ENCODE measurements at regions of chr10 and their contacts with region 1.

Region 1: GRCh38 chr10:29735596-29736318 is 101.0 kb upstream of the SVIL start:
- DNase-seq: peak; percentile 76 to 84 (median 80)
- H3K4me3 ChIP-seq: peak overlapping the region in 1 of 2 donors; percentile 62
- H3K4me3 Mint-ChIP-seq: peak overlapping the region; percentile 82 to 88 (median 84)
- H3K27ac ChIP-seq: peak overlapping the region; percentile 30
- H3K27ac Mint-ChIP-seq: peak overlapping the region in 4 of 7 donors; percentile 21 to 91 (median 74)
- H3K4me1 ChIP-seq: peaks cover 26% of the 10 kb centered on the region
- H3K4me1 Mint-ChIP-seq: peaks cover 23 to 48% (median 37%) of the 10 kb centered on the region in 4 donors
- H3K27me3 ChIP-seq: no peaks in the 10 kb centered on the region
- H3K27me3 Mint-ChIP-seq: no peaks in the 10 kb centered on the region

Region 2: DNA sequence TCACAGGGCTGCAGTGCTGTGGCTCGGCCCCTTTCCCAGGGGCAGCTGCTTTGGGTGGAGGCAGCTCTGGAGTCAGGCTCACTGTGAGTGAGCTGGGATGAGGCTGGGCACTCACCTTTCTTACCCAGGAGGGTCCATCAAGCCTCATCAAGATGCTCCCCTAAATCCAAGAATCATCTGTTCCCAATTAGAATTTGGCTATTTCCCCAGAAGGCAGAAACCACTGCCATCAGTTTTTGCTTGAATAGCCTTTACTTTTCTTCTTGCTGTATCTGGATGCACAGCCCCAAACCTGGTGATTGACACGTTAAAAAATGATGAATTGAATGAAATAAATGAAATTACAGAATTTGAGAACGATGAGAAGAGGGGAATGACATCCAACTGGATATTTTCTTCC is 521.2 kb before region 1 on chr10:
- CTCF ChIA-PET with region 1: no interaction called
- POLR2A ChIA-PET with region 1: no interaction called
- intact Hi-C with region 1: no loop called
- DNase-seq: no peak
- H3K4me3 ChIP-seq: no peak overlapping the region
- H3K4me3 Mint-ChIP-seq: no peak overlapping the region
- H3K27ac ChIP-seq: no peak overlapping the region
- H3K27ac Mint-ChIP-seq: no peak overlapping the region
- H3K4me1 ChIP-seq: no peaks in the 10 kb centered on the region
- H3K4me1 Mint-ChIP-seq: no peaks in the 10 kb centered on the region
- H3K27me3 ChIP-seq: no peaks in the 10 kb centered on the region
- H3K27me3 Mint-ChIP-seq: peaks cover 0 to 4% of the 10 kb centered on the region in 2 donors

Region 3: DNA sequence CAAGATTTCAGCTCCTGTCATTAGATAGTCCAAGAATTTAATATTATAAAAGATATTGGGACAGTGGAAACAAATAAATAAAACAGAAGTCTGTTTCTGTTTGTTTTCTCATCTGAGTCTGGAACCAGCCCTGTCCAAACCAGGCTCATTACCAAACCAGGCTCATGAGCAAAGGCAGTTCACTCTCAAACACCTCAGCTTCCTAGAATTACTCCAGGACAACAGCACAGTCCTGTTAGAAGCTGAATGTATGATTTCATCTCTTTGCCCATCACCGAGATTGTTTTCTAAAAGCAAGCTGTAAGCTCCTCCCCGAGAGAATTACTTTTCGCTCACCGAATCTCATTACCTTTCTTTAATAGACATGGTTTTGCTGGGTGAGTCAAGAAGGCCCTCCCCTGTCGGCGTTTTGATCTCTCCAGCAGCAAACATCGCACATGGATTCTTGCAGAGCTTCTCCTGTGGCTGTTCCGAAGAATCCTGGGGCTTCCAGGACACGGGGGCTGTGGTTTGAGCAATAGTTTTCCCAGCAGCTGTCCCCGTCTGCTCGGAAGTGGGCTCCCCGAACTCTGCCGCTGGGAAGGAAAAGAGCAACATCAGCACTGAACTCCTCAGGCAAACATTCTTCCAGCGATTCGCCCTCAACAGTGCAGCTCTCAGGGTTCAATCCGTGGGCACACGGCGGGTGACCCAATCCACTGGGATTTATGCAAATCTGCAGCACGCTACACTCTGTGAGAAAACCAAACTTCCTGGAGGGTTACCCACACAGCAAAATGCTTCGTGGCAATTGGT is 213.5 kb before region 1 on chr10:
- CTCF ChIA-PET with region 1: interaction called, 3 read pairs
- POLR2A ChIA-PET with region 1: no interaction called
- intact Hi-C with region 1: loop called (anchors 5 kb)
- DNase-seq: no peak
- H3K4me3 ChIP-seq: no peak overlapping the region
- H3K4me3 Mint-ChIP-seq: no peak overlapping the region
- H3K27ac ChIP-seq: no peak overlapping the region
- H3K27ac Mint-ChIP-seq: peak overlapping the region in 1 of 7 donors; percentile 57
- H3K4me1 ChIP-seq: no peaks in the 10 kb centered on the region
- H3K4me1 Mint-ChIP-seq: peaks cover 0 to 2% (median under 1%) of the 10 kb centered on the region in 4 donors
- H3K27me3 ChIP-seq: no peaks in the 10 kb centered on the region
- H3K27me3 Mint-ChIP-seq: no peaks in the 10 kb centered on the region

Region 4: DNA sequence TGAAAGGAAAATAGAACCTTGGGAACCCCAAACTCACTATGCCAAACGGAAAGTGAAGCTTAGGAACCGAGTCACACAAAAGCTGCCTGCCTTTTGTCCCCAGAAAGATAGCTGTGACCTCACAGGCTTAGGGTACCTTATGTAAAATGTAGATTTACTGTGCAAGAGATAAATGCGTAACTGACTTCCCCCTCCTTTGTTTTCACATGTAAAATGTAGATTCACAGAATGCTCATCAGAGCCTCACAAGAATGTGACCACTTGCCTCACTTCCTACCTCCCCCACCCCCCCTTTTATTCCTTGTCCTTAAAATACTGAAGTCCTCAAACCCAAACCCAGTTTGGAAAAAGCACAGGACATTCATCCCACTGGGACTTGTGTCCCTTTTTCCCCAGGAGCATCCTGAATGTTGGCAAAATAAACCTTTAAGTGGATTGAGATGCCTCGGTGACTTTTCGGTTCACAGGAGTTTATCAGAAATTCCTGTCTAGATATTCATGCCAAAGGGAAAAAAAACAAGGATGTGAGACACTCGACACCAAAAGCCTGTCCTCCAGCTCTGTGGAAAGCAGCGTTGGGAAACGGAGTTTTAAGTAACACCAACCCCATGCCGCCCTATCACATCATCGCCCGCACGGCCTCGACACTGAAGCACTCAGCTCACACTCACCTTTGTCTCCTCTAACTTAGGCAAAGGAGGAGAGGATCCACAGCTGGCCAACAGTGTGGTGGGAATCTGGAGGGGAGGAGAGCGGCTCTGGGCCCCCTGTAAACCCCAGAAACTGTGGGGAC is 146.9 kb before region 1 on chr10:
- CTCF ChIA-PET with region 1: interaction called, 28 read pairs
- POLR2A ChIA-PET with region 1: interaction called, 5 read pairs
- intact Hi-C with region 1: loop called (anchors 1 kb)
- DNase-seq: no peak
- H3K4me3 ChIP-seq: no peak overlapping the region
- H3K4me3 Mint-ChIP-seq: no peak overlapping the region
- H3K27ac ChIP-seq: no peak overlapping the region
- H3K27ac Mint-ChIP-seq: no peak overlapping the region
- H3K4me1 ChIP-seq: peaks cover 8% of the 10 kb centered on the region
- H3K4me1 Mint-ChIP-seq: peaks cover 12 to 33% (median 16%) of the 10 kb centered on the region in 4 donors
- H3K27me3 ChIP-seq: no peaks in the 10 kb centered on the region
- H3K27me3 Mint-ChIP-seq: no peaks in the 10 kb centered on the region

Region 5: DNA sequence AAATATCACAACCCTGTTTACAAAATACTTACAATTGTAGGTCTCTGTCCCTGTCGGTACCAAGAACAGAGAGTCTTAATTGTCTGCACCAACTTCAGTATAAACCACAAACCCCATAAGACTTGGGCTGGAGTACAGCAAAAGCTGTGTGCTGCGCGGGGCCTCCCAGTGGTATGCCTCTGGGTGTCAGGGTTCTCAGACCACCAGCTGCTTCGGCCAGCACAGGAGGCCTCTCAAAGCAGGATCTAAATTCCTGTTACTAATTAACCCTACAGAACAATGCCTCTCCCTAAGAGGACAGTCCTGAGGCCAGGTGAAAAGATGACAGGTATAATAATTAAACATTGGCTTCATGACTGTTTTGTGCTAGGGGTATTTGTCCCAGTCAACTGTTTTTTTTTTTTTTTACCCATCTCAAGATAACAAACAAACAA is 100.0 kb before region 1 on chr10:
- CTCF ChIA-PET with region 1: interaction called, 4 read pairs
- POLR2A ChIA-PET with region 1: interaction called, 4 read pairs
- intact Hi-C with region 1: loop called (anchors 1 kb)
- DNase-seq: peak; percentile 43 to 60 (median 55)
- H3K4me3 ChIP-seq: peak overlapping the region in 1 of 2 donors; percentile 11
- H3K4me3 Mint-ChIP-seq: peak overlapping the region; percentile 68 to 83 (median 74)
- H3K27ac ChIP-seq: peak overlapping the region; percentile 67
- H3K27ac Mint-ChIP-seq: peak overlapping the region; percentile 82 to 97 (median 96)
- H3K4me1 ChIP-seq: peaks cover 46% of the 10 kb centered on the region
- H3K4me1 Mint-ChIP-seq: peaks cover 33 to 66% (median 54%) of the 10 kb centered on the region in 4 donors
- H3K27me3 ChIP-seq: no peaks in the 10 kb centered on the region
- H3K27me3 Mint-ChIP-seq: no peaks in the 10 kb centered on the region

Region 6: GRCh38 chr10:29658984-29659965 is 76.5 kb before region 1 on chr10:
- CTCF ChIA-PET with region 1: interaction called, 10 read pairs
- POLR2A ChIA-PET with region 1: interaction called, 12 read pairs
- intact Hi-C with region 1: loop called (anchors 1 kb)
- DNase-seq: peak; percentile 76 to 95 (median 78)
- H3K4me3 ChIP-seq: peak overlapping the region in 1 of 2 donors; percentile 5
- H3K4me3 Mint-ChIP-seq: peak overlapping the region; percentile 60 to 80 (median 69)
- H3K27ac ChIP-seq: peak overlapping the region; percentile 66
- H3K27ac Mint-ChIP-seq: peak overlapping the region; percentile 88 to 96 (median 94)
- H3K4me1 ChIP-seq: peaks cover 33% of the 10 kb centered on the region
- H3K4me1 Mint-ChIP-seq: peaks cover 28 to 53% (median 34%) of the 10 kb centered on the region in 4 donors
- H3K27me3 ChIP-seq: no peaks in the 10 kb centered on the region
- H3K27me3 Mint-ChIP-seq: no peaks in the 10 kb centered on the region

Region 7: DNA sequence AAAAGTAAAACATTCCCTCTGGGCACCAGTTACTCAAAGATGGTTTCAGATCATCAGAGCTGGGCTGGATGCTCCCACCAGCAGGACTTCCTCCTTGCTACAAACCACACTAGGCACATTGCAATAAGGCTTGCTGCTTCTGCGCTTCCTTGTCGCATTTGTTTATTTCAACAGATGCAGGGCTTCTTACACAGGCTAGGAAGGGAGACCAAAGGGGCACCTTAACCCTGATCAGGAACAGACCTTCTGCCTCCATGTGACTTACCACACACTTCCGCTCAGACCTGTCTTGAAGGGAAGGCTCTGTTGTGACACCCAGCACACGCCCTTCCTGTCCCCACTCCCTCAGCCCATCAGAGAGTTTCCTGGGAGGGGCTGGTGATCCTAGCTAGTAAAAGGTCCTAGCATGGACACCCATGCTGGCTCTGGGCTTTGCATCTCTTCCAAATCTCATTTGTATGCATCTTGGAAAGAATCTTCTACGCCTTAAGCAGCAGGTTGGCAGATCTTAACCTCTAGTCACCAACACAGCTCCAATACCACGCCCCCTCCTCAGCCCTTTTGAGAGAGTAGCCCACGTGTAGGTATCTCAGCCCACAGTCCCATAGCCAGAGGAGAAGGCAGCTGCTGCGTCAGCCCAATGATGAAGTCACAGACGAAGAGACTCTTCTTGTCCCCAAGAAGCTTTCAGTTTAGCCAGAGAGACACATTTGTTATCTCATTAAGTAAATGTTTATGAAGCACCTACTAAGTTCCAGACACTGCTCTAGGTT is 53.9 kb before region 1 on chr10:
- CTCF ChIA-PET with region 1: interaction called, 13 read pairs
- POLR2A ChIA-PET with region 1: interaction called, 32 read pairs
- intact Hi-C with region 1: loop called (anchors 1 kb)
- DNase-seq: peak; percentile 81 to 88 (median 86)
- H3K4me3 ChIP-seq: peak overlapping the region in 1 of 2 donors; percentile 46
- H3K4me3 Mint-ChIP-seq: peak overlapping the region; percentile 49 to 85 (median 78)
- H3K27ac ChIP-seq: peak overlapping the region; percentile 54
- H3K27ac Mint-ChIP-seq: peak overlapping the region; percentile 90 to 99 (median 98)
- H3K4me1 ChIP-seq: peaks cover 66% of the 10 kb centered on the region
- H3K4me1 Mint-ChIP-seq: peaks cover 60 to 99% (median 79%) of the 10 kb centered on the region in 4 donors
- H3K27me3 ChIP-seq: no peaks in the 10 kb centered on the region
- H3K27me3 Mint-ChIP-seq: no peaks in the 10 kb centered on the region

Region 8: GRCh38 chr10:29689001-29689400 is 46.8 kb before region 1 on chr10:
- CTCF ChIA-PET with region 1: interaction called, 10 read pairs
- POLR2A ChIA-PET with region 1: interaction called, 7 read pairs
- intact Hi-C with region 1: no loop called
- DNase-seq: peak in 1 of 5 donors; percentile 56
- H3K4me3 ChIP-seq: no peak overlapping the region
- H3K4me3 Mint-ChIP-seq: peak overlapping the region in 5 of 8 donors; percentile 43 to 59 (median 51)
- H3K27ac ChIP-seq: no peak overlapping the region
- H3K27ac Mint-ChIP-seq: peak overlapping the region in 6 of 7 donors; percentile 61 to 89 (median 76)
- H3K4me1 ChIP-seq: peaks cover 26% of the 10 kb centered on the region
- H3K4me1 Mint-ChIP-seq: peaks cover 31 to 78% (median 55%) of the 10 kb centered on the region in 4 donors
- H3K27me3 ChIP-seq: no peaks in the 10 kb centered on the region
- H3K27me3 Mint-ChIP-seq: no peaks in the 10 kb centered on the region

Measured in CD4-positive, alpha-beta memory T cell (primary cell).